Activated CD4-positive, alpha-beta memory T cell treated with anti-CD3 and anti-CD28 coated beads for 36 hours (primary cell): ENCODE measurements at regions of chr19 and their contacts with region 1.

Region 1: GRCh38 chr19:47013041-47013517 is 6.6 kb upstream of the NPAS1 start:
- DNase-seq: peak; percentile 77
- H3K4me3 Mint-ChIP-seq: no peak overlapping the region
- H3K27ac Mint-ChIP-seq: no peak overlapping the region
- H3K4me1 Mint-ChIP-seq: peaks cover 10% of the 10 kb centered on the region
- H3K27me3 Mint-ChIP-seq: peaks cover 4% of the 10 kb centered on the region

Region 2: GRCh38 chr19:46860125-46860845 is 152.8 kb before region 1 on chr19:
- CTCF ChIA-PET with region 1: interaction called, 21 read pairs
- POLR2A ChIA-PET with region 1: no interaction called
- intact Hi-C with region 1: no loop called
- DNase-seq: peak; percentile 98
- H3K4me3 Mint-ChIP-seq: peak overlapping the region; percentile 85
- H3K27ac Mint-ChIP-seq: peak overlapping the region; percentile 91
- H3K4me1 Mint-ChIP-seq: peaks cover 17% of the 10 kb centered on the region
- H3K27me3 Mint-ChIP-seq: no peaks in the 10 kb centered on the region

Region 3: DNA sequence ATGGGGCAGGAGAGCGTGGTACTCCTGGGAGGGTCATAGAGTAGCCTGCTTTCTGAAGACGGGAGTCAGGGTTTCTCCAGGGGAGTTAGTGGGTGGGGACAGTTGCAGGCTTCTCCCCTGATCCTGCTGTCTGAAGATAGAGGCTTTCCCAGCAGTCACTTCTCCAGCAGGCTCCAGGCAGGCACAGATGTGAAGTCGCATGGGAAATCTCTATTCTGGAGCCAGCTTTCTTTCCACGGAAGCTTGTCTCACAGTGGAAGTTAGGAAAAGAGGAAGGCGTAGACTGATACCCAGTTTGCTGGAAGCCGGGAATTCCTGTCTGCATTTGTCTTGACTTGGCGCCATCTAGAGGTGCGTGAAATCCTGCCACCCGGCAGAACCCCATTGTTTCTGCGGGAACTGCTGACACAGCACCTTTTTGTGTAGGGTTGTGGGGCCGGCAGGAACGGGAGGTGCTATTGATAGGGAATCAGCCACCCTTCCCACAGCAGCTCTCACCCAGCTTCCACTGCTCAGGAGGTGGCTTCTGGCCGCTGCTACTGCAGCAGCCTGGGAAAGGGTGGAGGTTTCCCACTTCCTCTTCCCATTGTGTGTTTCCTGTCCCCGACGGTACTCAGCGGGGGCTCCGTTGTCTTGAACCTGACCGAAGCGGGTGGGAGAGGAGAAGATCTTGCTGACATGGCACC is 21.9 kb before region 1 on chr19:
- CTCF ChIA-PET with region 1: interaction called, 11 read pairs
- POLR2A ChIA-PET with region 1: no interaction called
- intact Hi-C with region 1: no loop called
- DNase-seq: peak; percentile 76
- H3K4me3 Mint-ChIP-seq: no peak overlapping the region
- H3K27ac Mint-ChIP-seq: peak overlapping the region; percentile 34
- H3K4me1 Mint-ChIP-seq: peaks cover 10% of the 10 kb centered on the region
- H3K27me3 Mint-ChIP-seq: no peaks in the 10 kb centered on the region

Region 4: DNA sequence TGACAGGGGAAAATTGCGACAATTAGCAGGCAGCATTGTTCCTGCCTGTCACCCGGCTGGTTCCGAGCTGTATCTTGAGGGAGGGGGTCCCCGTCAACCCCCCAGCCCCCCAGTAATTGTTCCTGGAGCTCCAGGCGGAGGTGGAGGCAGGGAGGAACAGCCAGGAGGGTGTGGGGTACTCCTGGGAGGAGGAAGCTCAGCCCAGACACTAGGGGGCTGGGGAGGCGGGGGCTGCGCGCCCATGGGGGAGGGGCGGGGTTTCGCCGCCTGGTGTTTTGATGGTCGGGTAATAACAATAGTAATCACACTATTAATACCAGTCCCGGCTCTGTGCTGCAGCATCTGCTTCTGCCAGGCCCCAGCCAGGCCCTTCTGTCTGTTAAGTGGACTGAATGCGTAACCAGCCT is 15.1 kb after region 1 on chr19:
- CTCF ChIA-PET with region 1: interaction called, 25 read pairs
- POLR2A ChIA-PET with region 1: interaction called, 3 read pairs
- intact Hi-C with region 1: loop called (anchors 2 kb)
- DNase-seq: no peak
- H3K4me3 Mint-ChIP-seq: no peak overlapping the region
- H3K27ac Mint-ChIP-seq: no peak overlapping the region
- H3K4me1 Mint-ChIP-seq: peaks cover 4% of the 10 kb centered on the region
- H3K27me3 Mint-ChIP-seq: peaks cover 38% of the 10 kb centered on the region

Region 5: GRCh38 chr19:47081111-47081510 is 68.0 kb after region 1 on chr19:
- CTCF ChIA-PET with region 1: interaction called, 19 read pairs
- POLR2A ChIA-PET with region 1: no interaction called
- intact Hi-C with region 1: no loop called
- DNase-seq: no peak
- H3K4me3 Mint-ChIP-seq: no peak overlapping the region
- H3K27ac Mint-ChIP-seq: peak overlapping the region; percentile 49
- H3K4me1 Mint-ChIP-seq: no peaks in the 10 kb centered on the region
- H3K27me3 Mint-ChIP-seq: no peaks in the 10 kb centered on the region

Region 6: DNA sequence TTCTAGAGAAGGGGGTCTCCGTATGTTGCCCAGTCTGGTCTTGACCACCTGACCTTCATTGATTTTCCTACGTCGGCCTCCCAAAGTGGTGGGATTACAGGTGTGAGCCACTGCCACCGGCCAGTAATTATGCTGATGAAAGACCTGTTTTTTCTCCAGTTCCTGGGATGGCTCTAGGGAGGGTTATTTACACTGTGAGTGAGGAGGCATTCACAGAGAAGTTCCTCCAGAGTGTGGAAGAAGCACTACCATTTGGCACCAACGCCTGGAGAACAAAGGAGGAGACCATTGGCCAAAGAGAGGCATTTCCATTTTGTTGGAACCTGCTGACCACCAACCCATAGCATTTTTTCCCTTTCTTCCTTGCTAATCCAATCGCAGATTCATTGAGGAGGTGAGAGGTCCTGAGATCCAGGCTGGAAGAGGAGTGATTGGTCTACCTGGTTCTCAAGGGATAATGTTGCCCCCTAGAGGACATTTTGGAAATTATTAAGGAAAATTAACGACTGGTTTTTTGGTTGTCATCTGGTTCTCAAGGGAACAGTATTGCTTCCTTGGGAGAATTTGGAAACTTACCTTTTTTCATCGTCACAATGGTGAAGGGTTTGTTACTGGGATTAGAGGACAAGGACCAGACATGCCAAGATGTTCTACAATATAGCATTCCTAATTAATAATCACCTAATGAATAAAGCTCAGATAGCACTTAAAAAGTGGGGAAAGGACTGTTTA is 112.0 kb after region 1 on chr19:
- CTCF ChIA-PET with region 1: interaction called, 54 read pairs
- POLR2A ChIA-PET with region 1: no interaction called
- intact Hi-C with region 1: no loop called
- DNase-seq: no peak
- H3K4me3 Mint-ChIP-seq: no peak overlapping the region
- H3K27ac Mint-ChIP-seq: peak overlapping the region; percentile 21
- H3K4me1 Mint-ChIP-seq: peaks cover 2% of the 10 kb centered on the region
- H3K27me3 Mint-ChIP-seq: no peaks in the 10 kb centered on the region